ENCODE measurements at regions of chr19 and their contacts with region 1.

Region 1: GRCh38 chr19:27966390-27966816 is 1246.5 kb downstream of the UQCRFS1 start:
- DNase-seq: no peak
- H3K4me3 Mint-ChIP-seq: no peak overlapping the region
- H3K27ac Mint-ChIP-seq: no peak overlapping the region
- H3K4me1 Mint-ChIP-seq: peaks cover 2% of the 10 kb centered on the region
- H3K27me3 Mint-ChIP-seq: no peaks in the 10 kb centered on the region

Region 2: DNA sequence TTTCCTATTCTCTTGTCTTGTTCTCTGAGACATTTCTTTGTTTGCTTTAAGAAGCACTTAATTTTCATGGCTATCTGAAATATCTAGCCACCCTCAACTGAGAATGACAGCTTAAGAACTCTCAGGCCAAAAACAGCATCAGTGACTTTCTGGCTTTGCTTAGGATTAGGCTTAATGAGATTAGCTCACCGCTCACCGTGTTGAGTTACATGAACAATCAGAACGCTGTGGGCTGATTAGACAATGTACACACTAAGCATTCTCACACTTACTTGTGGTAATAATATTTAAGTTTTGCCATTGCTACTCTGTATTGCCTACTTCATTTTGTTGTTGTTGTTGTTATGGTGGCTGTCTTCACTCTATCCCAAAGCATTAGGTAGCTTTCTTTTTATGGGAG is 37.0 kb before region 1 on chr19:
- CTCF ChIA-PET with region 1: no interaction called
- POLR2A ChIA-PET with region 1: no interaction called
- intact Hi-C with region 1: no loop called
- DNase-seq: no peak
- H3K4me3 Mint-ChIP-seq: no peak overlapping the region
- H3K27ac Mint-ChIP-seq: no peak overlapping the region
- H3K4me1 Mint-ChIP-seq: no peaks in the 10 kb centered on the region
- H3K27me3 Mint-ChIP-seq: no peaks in the 10 kb centered on the region

Region 3: DNA sequence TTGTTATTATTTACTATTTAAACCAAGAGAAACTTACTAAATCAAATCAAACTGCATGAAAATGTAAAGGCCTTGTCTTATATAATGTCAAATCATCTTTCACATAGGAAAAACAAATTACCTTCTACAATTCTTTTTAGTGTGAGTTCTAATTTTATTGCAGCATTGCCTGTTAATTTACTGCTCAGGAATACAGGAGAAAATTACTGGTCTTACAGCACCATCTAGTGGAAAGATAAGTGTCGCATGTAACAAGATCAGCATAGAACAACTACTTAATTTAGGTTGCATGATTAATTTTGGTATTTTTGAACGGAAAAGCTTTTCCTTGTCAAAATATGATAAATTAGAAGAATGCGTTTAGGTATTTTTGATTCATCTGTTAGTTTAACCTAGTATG is 743.9 kb after region 1 on chr19:
- CTCF ChIA-PET with region 1: interaction called, 3 read pairs
- POLR2A ChIA-PET with region 1: no interaction called
- intact Hi-C with region 1: loop called (anchors 5 kb)
- DNase-seq: no peak
- H3K4me3 Mint-ChIP-seq: no peak overlapping the region
- H3K27ac Mint-ChIP-seq: no peak overlapping the region
- H3K4me1 Mint-ChIP-seq: no peaks in the 10 kb centered on the region
- H3K27me3 Mint-ChIP-seq: peaks cover 6% of the 10 kb centered on the region

Region 4: GRCh38 chr19:28878862-28879566 is 912.6 kb after region 1 on chr19:
- CTCF ChIA-PET with region 1: interaction called, 3 read pairs
- POLR2A ChIA-PET with region 1: no interaction called
- intact Hi-C with region 1: loop called (anchors 10 kb)
- DNase-seq: peak; percentile 64
- H3K4me3 Mint-ChIP-seq: no peak overlapping the region
- H3K27ac Mint-ChIP-seq: no peak overlapping the region
- H3K4me1 Mint-ChIP-seq: no peaks in the 10 kb centered on the region
- H3K27me3 Mint-ChIP-seq: peaks cover 2% of the 10 kb centered on the region

Measured in activated CD4-positive, alpha-beta memory T cell treated with anti-CD3 and anti-CD28 coated beads for 36 hours (primary cell).